CD8-positive, alpha-beta memory T cell (primary cell): ENCODE measurements at regions of chr1 and their contacts with region 1.

Region 1: GRCh38 chr1:109099938-109100773 is 9.6 kb downstream of the TMEM167B start:
- DNase-seq: peak; percentile 94 to 98 (median 96)
- H3K4me3 ChIP-seq: peak overlapping the region; percentile 76
- H3K4me3 Mint-ChIP-seq: peak overlapping the region; percentile 94 to 99 (median 97)
- H3K27ac ChIP-seq: peak overlapping the region; percentile 91
- H3K27ac Mint-ChIP-seq: peak overlapping the region; percentile 92 to 99 (median 98)
- H3K4me1 ChIP-seq: peaks cover 8% of the 10 kb centered on the region
- H3K4me1 Mint-ChIP-seq: peaks cover 8 to 14% (median 12%) of the 10 kb centered on the region in 3 donors
- H3K27me3 ChIP-seq: no peaks in the 10 kb centered on the region
- H3K27me3 Mint-ChIP-seq: peaks cover 0 to 2% of the 10 kb centered on the region in 2 donors

Region 2: GRCh38 chr1:108828022-108828961 is 271.9 kb before region 1 on chr1:
- CTCF ChIA-PET with region 1: no interaction called
- POLR2A ChIA-PET with region 1: no interaction called
- DNase-seq: peak; percentile 48 to 79 (median 63)
- H3K4me3 ChIP-seq: no peak overlapping the region
- H3K4me3 Mint-ChIP-seq: no peak overlapping the region
- H3K27ac ChIP-seq: no peak overlapping the region
- H3K27ac Mint-ChIP-seq: peak overlapping the region in 2 of 8 donors; percentile 12 to 46
- H3K4me1 ChIP-seq: no peaks in the 10 kb centered on the region
- H3K4me1 Mint-ChIP-seq: peaks cover 0 to 5% (median 4%) of the 10 kb centered on the region in 3 donors
- H3K27me3 ChIP-seq: no peaks in the 10 kb centered on the region
- H3K27me3 Mint-ChIP-seq: no peaks in the 10 kb centered on the region

Region 3: GRCh38 chr1:109041621-109042468 is 58.3 kb before region 1 on chr1 and contains the start of gene WDR47:
- CTCF ChIA-PET with region 1: interaction called, 19 read pairs
- POLR2A ChIA-PET with region 1: interaction called, 30 read pairs
- DNase-seq: peak; percentile 93 to 98 (median 96)
- H3K4me3 ChIP-seq: peak within 1 kb of the TSS; percentile 79
- H3K4me3 Mint-ChIP-seq: peak within 1 kb of the TSS; percentile 89 to 98 (median 92)
- H3K27ac ChIP-seq: peak within 1 kb of the TSS; percentile 87
- H3K27ac Mint-ChIP-seq: peak within 1 kb of the TSS; percentile 79 to 99 (median 92)
- H3K4me1 ChIP-seq: no peaks in the 10 kb centered on the region
- H3K4me1 Mint-ChIP-seq: peaks cover 16 to 24% (median 16%) of the 10 kb centered on the region in 3 donors
- H3K27me3 ChIP-seq: no peaks in the 10 kb centered on the region
- H3K27me3 Mint-ChIP-seq: no peaks in the 10 kb centered on the region
- total RNA-seq, gene WDR47: 14.4 to 15.1 TPM

Region 4: DNA sequence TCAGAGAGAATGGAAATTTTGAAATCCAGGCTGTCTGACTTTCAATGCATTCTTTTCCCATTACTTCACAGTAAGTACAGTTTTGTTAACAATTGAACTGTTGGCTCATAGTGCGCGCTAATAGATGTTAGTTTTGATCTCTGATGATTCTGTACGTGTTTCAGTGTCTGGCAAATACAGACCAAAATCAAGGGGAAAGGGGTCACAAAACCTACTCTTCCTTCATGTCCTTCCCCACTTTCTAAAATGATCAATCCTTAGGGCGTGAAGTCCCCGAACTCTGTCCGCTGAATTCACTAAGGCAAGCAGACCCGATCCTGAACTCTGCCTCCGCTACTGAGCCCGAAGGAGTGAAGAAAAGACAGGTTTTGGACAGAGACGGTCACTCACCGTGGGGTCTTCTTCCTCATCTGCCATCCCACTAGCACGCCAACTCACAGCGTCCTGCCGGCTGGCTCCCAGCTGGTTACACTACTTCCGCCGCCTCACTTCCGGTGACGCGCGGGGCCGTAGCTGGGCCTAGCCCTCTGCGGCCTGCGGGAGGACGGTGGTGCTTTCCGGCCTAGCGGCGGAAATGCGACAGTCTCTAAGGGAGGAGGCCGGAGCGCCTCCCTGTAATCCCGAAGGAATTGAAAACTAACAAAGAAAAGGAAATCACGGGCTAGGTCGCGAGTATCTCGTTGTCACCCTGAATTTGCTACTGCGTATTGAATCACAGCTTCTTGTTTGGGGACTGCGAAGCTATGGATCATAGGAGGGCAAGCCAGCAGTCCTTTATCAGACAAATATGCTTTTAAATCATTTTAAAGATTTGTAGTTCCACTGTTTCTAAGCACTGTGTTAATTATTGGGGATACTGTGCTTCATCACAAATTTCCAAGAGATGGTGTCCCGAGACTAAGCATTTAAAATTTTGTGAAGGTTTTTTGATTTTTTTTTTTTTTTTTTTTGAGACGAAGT is 24.3 kb before region 1 on chr1 and contains the start of gene TAF13:
- CTCF ChIA-PET with region 1: interaction called, 27 read pairs
- POLR2A ChIA-PET with region 1: interaction called, 21 read pairs
- DNase-seq: peak; percentile 81 to 92 (median 84)
- H3K4me3 ChIP-seq: peak within 1 kb of the TSS; percentile 90
- H3K4me3 Mint-ChIP-seq: peak within 1 kb of the TSS; percentile 92 to 100 (median 99)
- H3K27ac ChIP-seq: peak within 1 kb of the TSS; percentile 87
- H3K27ac Mint-ChIP-seq: peak within 1 kb of the TSS; percentile 97 to 100 (median 99)
- H3K4me1 ChIP-seq: peaks cover 15% of the 10 kb centered on the region
- H3K4me1 Mint-ChIP-seq: peaks cover 22 to 31% (median 23%) of the 10 kb centered on the region in 3 donors
- H3K27me3 ChIP-seq: no peaks in the 10 kb centered on the region
- H3K27me3 Mint-ChIP-seq: no peaks in the 10 kb centered on the region
- total RNA-seq, gene TAF13: 37.5 to 40.9 TPM

Region 5: GRCh38 chr1:109083923-109084322 is 16.2 kb before region 1 on chr1:
- CTCF ChIA-PET with region 1: interaction called, 23 read pairs
- POLR2A ChIA-PET with region 1: interaction called, 4 read pairs
- DNase-seq: no peak
- H3K4me3 ChIP-seq: no peak overlapping the region
- H3K4me3 Mint-ChIP-seq: peak overlapping the region in 1 of 7 donors; percentile 41
- H3K27ac ChIP-seq: no peak overlapping the region
- H3K27ac Mint-ChIP-seq: no peak overlapping the region
- H3K4me1 ChIP-seq: no peaks in the 10 kb centered on the region
- H3K4me1 Mint-ChIP-seq: peaks cover 0 to under 1% (median 0%) of the 10 kb centered on the region in 3 donors
- H3K27me3 ChIP-seq: no peaks in the 10 kb centered on the region
- H3K27me3 Mint-ChIP-seq: peaks cover 0 to 5% of the 10 kb centered on the region in 2 donors

Region 6: GRCh38 chr1:109112652-109113285 is 12.6 kb after region 1 on chr1:
- CTCF ChIA-PET with region 1: interaction called, 145 read pairs
- POLR2A ChIA-PET with region 1: interaction called, 39 read pairs
- DNase-seq: peak; percentile 84 to 94 (median 87)
- H3K4me3 ChIP-seq: peak overlapping the region; percentile 73
- H3K4me3 Mint-ChIP-seq: peak overlapping the region; percentile 87 to 94 (median 89)
- H3K27ac ChIP-seq: peak overlapping the region; percentile 49
- H3K27ac Mint-ChIP-seq: peak overlapping the region; percentile 75 to 99 (median 96)
- H3K4me1 ChIP-seq: peaks cover 27% of the 10 kb centered on the region
- H3K4me1 Mint-ChIP-seq: peaks cover 22 to 30% (median 29%) of the 10 kb centered on the region in 3 donors
- H3K27me3 ChIP-seq: no peaks in the 10 kb centered on the region
- H3K27me3 Mint-ChIP-seq: peaks cover 3 to 13% of the 10 kb centered on the region in 2 donors

Region 7: DNA sequence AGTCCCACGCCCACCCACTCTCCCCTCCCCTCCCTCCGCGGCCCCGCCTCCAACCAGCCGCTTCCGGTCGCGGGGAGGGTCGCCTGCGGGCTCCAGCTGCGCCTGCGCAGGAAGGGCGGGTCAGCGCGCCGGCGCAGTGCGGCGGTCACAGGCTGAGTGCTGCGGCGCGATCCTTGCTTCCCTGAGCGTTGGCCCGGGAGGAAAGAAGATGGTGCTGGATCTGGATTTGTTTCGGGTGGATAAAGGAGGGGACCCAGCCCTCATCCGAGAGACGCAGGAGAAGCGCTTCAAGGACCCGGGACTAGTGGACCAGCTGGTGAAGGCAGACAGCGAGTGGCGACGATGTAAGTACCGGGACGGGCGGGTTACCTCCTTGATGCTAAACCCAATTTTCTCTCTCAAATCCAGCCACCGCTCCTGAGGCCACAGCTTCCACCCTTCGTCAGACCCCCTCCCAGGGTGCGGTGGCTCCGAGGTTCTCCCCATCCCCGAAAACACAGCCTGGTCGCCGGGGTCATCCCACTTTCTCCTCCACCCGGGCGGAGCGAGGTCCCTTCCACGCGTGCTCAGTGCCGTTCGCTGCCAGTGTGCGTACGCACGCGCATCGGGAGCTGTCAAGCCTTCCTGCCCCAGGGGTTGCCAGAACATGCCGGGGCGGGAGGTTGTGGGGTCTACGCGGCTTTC is 113.8 kb after region 1 on chr1 and contains the start of gene SARS1:
- CTCF ChIA-PET with region 1: interaction called, 7 read pairs
- POLR2A ChIA-PET with region 1: interaction called, 10 read pairs
- DNase-seq: peak; percentile 75 to 91 (median 85)
- H3K4me3 ChIP-seq: peak within 1 kb of the TSS; percentile 93
- H3K4me3 Mint-ChIP-seq: peak within 1 kb of the TSS; percentile 92 to 100 (median 99)
- H3K27ac ChIP-seq: peak within 1 kb of the TSS; percentile 78
- H3K27ac Mint-ChIP-seq: peak within 1 kb of the TSS; percentile 73 to 98 (median 96)
- H3K4me1 ChIP-seq: peaks cover 36% of the 10 kb centered on the region
- H3K4me1 Mint-ChIP-seq: peaks cover 32 to 44% (median 39%) of the 10 kb centered on the region in 3 donors
- H3K27me3 ChIP-seq: no peaks in the 10 kb centered on the region
- H3K27me3 Mint-ChIP-seq: peaks cover 0 to 6% of the 10 kb centered on the region in 2 donors
- total RNA-seq, gene SARS1: 189 to 195 TPM